Head of caudate nucleus (tissue), 42 donors: ENCODE measurements at regions of chr16 and their contacts with region 1.

Region 1: GRCh38 chr16:10922328-10923145 is 19.7 kb downstream of the DEXI start:
- DNase-seq: peak in 11 of 42 donors; percentile 31 to 63 (median 37)

Region 2: DNA sequence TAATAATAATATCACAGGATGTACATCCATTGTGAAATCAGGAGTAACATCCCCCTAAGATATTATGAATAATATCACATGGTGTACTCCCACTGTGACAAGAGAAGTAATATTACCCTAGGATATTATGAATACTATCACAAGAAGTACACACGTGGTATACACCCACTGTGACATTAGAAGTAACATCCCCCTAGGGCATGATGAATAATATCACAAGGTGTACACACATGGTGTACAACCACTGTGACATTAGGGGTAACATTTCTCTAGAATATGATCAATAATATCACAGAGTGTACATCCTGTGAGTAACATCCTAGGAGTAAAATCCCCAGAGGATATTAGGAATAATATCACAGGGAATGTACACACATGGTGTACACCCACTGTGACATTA is 222.8 kb before region 1 on chr16:
- intact Hi-C with region 1: no loop called
- DNase-seq: no peak

Region 3: GRCh38 chr16:10743610-10744393 is 178.7 kb before region 1 on chr16 and contains the start of gene NUBP1:
- intact Hi-C with region 1: loop called (anchors 10 kb)
- DNase-seq: peak; percentile 98 to 100 (median 100)

Region 4: DNA sequence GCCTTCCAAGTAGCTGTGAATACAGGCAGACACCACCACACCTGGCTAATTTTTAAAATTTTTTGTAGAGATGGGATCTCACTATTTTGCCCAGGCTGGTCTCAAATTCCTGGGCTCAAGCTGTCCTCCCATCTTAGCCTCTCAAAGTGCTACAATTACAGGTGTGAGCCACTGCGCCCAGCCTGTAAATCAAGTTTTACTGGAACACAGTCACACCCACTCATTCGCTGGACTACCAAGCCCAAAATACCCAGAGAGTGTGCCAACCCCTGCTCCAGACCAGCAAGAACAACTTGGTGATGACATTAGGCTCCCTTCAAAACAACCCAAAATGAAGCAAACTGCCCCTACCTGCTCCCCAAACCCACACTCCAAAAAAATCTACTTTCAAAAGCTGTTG is 139.9 kb before region 1 on chr16:
- intact Hi-C with region 1: no loop called
- DNase-seq: no peak

Region 5: GRCh38 chr16:10876799-10877341 is 45.7 kb before region 1 on chr16 and contains the start of gene CIITA:
- intact Hi-C with region 1: no loop called
- DNase-seq: peak in 41 of 42 donors; percentile 28 to 87 (median 60)

Region 6: DNA sequence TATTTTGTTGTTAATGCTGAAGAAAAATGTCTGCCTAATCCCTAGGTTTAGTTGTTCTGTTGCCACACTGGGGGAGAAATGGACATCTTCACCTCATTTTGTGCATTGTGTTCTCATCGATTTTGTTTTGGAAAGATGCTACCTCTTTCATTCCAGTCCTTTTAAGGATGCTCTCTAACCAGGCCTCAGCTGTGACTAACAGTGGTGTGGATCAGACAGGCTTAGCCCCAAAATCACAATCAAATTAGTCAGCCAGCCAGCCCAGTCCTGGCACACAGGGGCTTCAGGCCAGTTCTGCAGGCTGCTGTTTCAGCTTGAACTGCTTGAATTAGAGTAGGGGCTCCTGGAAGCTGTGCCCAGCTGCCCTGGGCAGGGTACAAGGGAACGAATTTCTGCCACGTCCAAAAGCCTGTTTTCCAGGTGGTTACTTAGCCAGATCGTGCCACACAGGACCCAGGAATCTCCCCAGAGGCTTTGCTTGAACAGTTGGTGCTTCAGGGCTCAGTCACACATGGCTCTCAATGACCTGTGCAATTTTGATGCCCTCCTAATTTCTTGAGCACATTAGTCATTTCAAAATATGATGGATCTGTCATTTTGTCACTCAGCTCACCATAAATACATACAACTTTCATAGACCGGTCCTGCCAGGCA is 82.5 kb after region 1 on chr16:
- intact Hi-C with region 1: no loop called
- DNase-seq: peak in 1 of 42 donors; percentile 43